Activated B cell treated with CpG ODN at 0.5 μM for 24 hours (primary cell): ENCODE measurements at regions of chr12 and their contacts with region 1.

Region 1: GRCh38 chr12:131511391-131511802 is 199.5 kb upstream of the SFSWAP start:
- DNase-seq: peak; percentile 36
- ATAC-seq: peak; percentile 87
- H3K4me3 Mint-ChIP-seq: peak overlapping the region; percentile 48
- H3K27ac Mint-ChIP-seq: peak overlapping the region; percentile 54
- H3K4me1 Mint-ChIP-seq: peaks cover 20% of the 10 kb centered on the region
- H3K27me3 Mint-ChIP-seq: no peaks in the 10 kb centered on the region
- CTCF ChIP-seq: no peak

Region 2: GRCh38 chr12:131530422-131530821 is 19.0 kb after region 1 on chr12:
- CTCF ChIA-PET with region 1: no interaction called
- POLR2A ChIA-PET with region 1: no interaction called
- intact Hi-C with region 1: no loop called
- DNase-seq: no peak
- ATAC-seq: no peak
- H3K4me3 Mint-ChIP-seq: no peak overlapping the region
- H3K27ac Mint-ChIP-seq: no peak overlapping the region
- H3K4me1 Mint-ChIP-seq: no peaks in the 10 kb centered on the region
- H3K27me3 Mint-ChIP-seq: peaks cover 13% of the 10 kb centered on the region
- CTCF ChIP-seq: no peak

Region 3: GRCh38 chr12:131547555-131547954 is 36.2 kb after region 1 on chr12:
- CTCF ChIA-PET with region 1: no interaction called
- POLR2A ChIA-PET with region 1: no interaction called
- intact Hi-C with region 1: no loop called
- DNase-seq: no peak
- ATAC-seq: no peak
- H3K4me3 Mint-ChIP-seq: no peak overlapping the region
- H3K27ac Mint-ChIP-seq: no peak overlapping the region
- H3K4me1 Mint-ChIP-seq: no peaks in the 10 kb centered on the region
- H3K27me3 Mint-ChIP-seq: peaks cover 11% of the 10 kb centered on the region
- CTCF ChIP-seq: no peak

Region 4: DNA sequence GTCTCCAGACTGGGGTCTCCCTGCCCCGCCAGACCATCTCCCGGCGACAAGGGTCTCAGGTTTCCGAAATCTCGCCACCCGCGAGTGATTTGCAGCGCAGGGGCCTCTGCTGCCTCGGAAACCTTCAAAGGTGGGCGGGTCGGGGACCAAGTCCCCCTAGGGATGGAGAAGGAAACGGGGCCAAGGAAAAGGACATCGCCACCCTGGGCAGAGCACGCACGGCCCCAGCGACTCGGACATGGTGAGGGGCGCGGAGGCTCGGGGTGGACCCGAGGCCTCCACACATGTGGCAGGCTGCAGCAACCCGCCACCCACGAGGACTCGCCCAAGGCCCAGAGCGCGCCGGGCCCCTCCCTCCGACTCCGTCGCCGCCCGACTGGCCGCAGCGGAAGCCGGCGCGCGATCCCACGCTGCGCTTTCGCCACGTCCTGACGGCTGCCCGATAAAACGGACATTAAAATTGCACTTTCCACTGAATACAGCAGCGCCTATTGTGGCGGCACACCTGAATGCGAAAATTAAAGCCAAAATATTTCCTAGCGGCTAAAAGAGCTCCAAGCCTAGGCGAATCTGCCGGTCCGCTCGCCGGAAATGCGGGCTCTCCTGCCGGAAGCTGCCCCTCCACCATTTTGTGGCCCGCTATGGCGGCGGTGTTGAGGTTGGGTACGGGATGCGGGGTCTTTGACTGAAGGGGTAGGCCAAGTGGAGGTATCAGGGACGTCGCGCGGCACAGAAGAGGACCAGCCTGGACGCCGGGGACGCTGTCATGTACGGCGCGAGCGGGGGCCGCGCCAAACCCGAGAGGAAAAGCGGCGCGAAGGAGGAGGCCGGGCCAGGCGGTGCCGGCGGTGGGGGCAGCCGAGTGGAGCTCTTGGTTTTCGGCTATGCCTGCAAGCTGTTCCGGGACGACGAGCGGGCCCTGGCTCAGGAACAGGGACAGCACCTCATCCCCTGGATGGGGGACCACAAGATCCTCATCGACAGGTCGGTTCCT is 199.4 kb after region 1 on chr12 and contains the start of gene SFSWAP:
- CTCF ChIA-PET with region 1: no interaction called
- POLR2A ChIA-PET with region 1: interaction called, 5 read pairs
- intact Hi-C with region 1: loop called (anchors 2 kb)
- DNase-seq: peak; percentile 79
- ATAC-seq: peak; percentile 95
- H3K4me3 Mint-ChIP-seq: peak within 1 kb of the TSS; percentile 93
- H3K27ac Mint-ChIP-seq: peak within 1 kb of the TSS; percentile 98
- H3K4me1 Mint-ChIP-seq: peaks cover 31% of the 10 kb centered on the region
- H3K27me3 Mint-ChIP-seq: no peaks in the 10 kb centered on the region
- CTCF ChIP-seq: no peak
- total RNA-seq, gene SFSWAP: 75.1 and 88.0 TPM in 2 replicates